Lower lobe of right lung (tissue), 2 donors: ENCODE measurements at regions of chr1 and their contacts with region 1.

Region 1: DNA sequence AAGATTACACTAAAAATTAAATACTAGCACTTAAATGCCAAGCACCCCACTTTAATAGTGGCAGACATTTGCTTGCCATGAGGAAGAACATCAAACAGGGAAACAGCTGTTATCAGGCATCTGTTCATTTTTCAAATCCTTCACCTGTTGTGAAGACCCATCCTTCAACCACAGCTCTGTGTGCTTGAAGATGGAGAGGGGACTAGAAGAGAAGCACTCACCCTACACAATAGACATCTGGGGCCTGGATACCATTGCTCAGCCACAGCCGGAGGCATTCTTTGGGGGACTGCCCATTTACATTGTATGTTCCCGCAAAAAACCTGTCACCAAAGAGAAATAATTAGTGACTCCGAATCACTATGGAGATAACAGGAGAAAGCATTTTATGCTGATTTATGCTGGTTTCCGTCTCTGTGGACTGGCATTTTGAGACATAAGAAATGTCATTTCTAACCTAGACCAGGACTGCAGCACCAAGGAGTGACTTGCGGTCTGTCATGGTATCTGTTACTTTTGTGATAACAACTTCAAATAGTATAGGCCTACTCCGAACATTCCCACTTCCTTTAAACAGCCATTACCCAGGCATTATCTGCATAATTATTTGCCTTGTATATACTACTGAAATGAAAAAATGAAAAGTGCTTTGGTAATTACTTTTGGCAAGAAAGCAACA is 28.8 kb upstream of the MTF1 start:
- DNase-seq: no peak
- ATAC-seq: no peak
- H3K4me3 ChIP-seq: no peak overlapping the region
- H3K27ac ChIP-seq: no peak overlapping the region
- H3K4me1 ChIP-seq: peaks cover 4% of the 10 kb centered on the region
- H3K27me3 ChIP-seq: no peaks in the 10 kb centered on the region
- CTCF ChIP-seq: no peak

Region 2: DNA sequence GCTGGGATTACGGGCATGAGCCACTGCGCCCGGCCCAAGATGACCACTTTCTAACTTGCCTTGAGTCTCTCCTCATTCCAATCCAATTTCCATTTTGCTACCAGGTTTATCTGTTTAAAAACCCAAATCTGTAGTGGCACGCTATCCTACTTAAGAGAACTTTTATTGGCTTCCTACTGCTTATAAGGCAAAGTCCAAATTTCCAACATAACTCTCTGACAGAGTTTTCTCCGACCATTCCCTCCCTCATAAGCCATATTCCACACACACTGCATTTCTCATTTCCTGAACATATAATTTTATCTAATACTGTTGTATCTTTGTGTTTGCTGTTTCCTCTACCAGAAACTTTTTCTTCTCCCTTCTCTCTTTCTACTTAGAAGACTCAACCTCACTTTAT is 86.4 kb after region 1 on chr1:
- intact Hi-C with region 1: loop called (anchors 5 kb)
- DNase-seq: no peak
- ATAC-seq: no peak
- H3K4me3 ChIP-seq: no peak overlapping the region
- H3K27ac ChIP-seq: no peak overlapping the region
- H3K4me1 ChIP-seq: no peaks in the 10 kb centered on the region
- H3K27me3 ChIP-seq: no peaks in the 10 kb centered on the region
- CTCF ChIP-seq: no peak

Region 3: GRCh38 chr1:38012363-38013226 is 124.4 kb after region 1 on chr1 and contains the start of gene UTP11:
- intact Hi-C with region 1: no loop called
- DNase-seq: peak; percentile 96
- ATAC-seq: peak; percentile 98 to 99
- H3K4me3 ChIP-seq: peak within 1 kb of the TSS; percentile 78
- H3K27ac ChIP-seq: peak within 1 kb of the TSS; percentile 91
- H3K4me1 ChIP-seq: peaks cover 41% of the 10 kb centered on the region
- H3K27me3 ChIP-seq: no peaks in the 10 kb centered on the region
- CTCF ChIP-seq: no peak
- total RNA-seq, gene UTP11: 22.8 TPM